Heart left ventricle (tissue), 16 donors: ENCODE measurements at regions of chr14 and their contacts with region 1.

Region 1: GRCh38 chr14:47539031-47539461 is 136.4 kb downstream of the MDGA2 start:
- DNase-seq: peak in 1 of 5 donors; percentile 25
- ATAC-seq: peak in 1 of 4 donors; percentile 24
- H3K4me3 ChIP-seq: no peak overlapping the region
- H3K27ac ChIP-seq: no peak overlapping the region
- H3K4me1 ChIP-seq: no peaks in the 10 kb centered on the region
- H3K27me3 ChIP-seq: no peaks in the 10 kb centered on the region
- CTCF ChIP-seq: peak in 10 of 12 donors; percentile 20 to 58 (median 34)
- POLR2A ChIP-seq: no peak

Region 2: DNA sequence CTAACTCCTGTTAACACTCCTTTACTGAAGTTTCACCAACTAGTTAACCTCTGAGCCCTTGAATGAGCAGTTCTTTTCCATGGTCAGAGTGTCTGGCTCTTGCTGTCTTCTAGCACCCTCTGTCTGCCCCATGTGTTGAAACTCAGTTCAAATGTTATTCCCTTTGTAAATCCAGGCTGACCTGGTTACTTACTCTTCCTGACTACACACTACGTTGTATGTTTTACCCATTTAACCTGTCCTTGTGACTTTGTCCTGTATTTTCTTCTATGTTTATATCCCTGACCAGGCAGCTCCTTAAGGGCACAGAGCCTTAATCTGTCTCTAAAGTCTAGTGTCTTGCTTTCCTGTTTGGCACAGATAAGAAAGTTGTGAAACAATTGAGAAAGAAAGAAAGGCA is 498.5 kb before region 1 on chr14:
- intact Hi-C with region 1: loop called in 1 of 10 experiments (anchors 10 kb)
- DNase-seq: no peak
- ATAC-seq: no peak
- H3K4me3 ChIP-seq: no peak overlapping the region
- H3K27ac ChIP-seq: no peak overlapping the region
- H3K4me1 ChIP-seq: no peaks in the 10 kb centered on the region
- H3K27me3 ChIP-seq: no peaks in the 10 kb centered on the region
- CTCF ChIP-seq: no peak
- POLR2A ChIP-seq: no peak

Region 3: DNA sequence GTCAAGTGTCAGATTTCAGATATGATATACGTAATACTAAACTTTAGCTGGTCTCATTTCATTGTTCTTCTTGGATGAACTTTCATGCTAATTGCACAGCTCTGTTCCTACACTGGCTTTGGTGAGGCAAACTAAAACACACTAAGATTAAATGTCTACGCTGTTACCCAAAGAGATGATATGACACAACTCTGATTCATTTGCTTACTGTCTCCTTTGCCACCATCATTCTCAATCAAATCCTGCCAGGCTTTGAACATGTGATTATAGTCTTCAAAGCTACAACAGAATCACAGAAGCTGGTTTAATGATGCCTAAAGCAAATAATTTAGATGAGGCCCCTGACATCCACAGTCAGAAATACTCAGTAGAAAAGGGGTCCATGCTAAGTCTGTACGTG is 98.7 kb after region 1 on chr14:
- intact Hi-C with region 1: no loop called
- DNase-seq: no peak
- ATAC-seq: no peak
- H3K4me3 ChIP-seq: no peak overlapping the region
- H3K27ac ChIP-seq: no peak overlapping the region
- H3K4me1 ChIP-seq: no peaks in the 10 kb centered on the region
- H3K27me3 ChIP-seq: no peaks in the 10 kb centered on the region
- CTCF ChIP-seq: no peak
- POLR2A ChIP-seq: no peak